HCT116 (cell line): ENCODE measurements at regions of chr1 and their contacts with region 1.

Region 1: DNA sequence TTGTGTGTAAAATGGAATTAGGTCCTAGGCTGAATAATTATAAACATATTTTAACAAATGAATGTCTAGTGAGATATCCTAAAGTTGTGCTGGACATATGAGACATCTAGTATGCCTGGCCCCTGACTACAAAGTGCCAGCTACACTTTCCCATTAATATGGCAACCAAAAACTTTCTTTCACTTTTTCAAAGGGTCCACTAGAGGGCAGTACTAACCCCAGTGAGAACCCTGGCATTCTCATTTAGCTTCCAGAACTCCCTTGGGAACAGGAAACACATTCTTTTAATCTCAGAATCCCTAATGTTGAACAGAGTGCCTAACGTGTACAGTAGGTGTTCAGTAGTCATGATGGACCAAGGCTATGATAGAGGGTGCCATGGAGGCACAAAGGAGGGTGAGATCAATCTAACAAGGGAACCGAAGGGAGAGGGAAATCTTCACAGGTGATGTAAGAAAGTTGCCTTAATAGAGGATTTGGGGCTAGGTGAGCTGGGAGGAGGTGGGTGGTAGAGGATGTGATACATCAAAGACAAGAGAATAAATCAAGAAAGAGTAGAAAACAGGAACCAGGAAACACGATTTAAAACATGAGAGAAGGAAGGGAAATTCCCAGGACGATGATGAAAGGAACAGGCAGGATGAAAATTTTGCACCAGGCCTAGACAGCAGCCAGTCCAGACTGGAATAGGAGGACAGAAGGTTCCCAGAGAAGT is 41.6 kb downstream of the NSL1 start:
- DNase-seq: peak; percentile 44
- ATAC-seq: peak; percentile 86
- H3K4me3 ChIP-seq: no peak overlapping the region
- H3K27ac ChIP-seq: no peak overlapping the region
- H3K4me1 ChIP-seq: peaks cover 0 to 6% of the 10 kb centered on the region in 2 experiments; a peak in 3 of 4 replicates
- H3K27me3 ChIP-seq: no peaks in the 10 kb centered on the region
- CTCF ChIP-seq: peak; percentile 58 to 81 (median 67)
- POLR2A ChIP-seq: no peak
- RAD21 ChIP-seq: peak; percentile 57

Region 2: GRCh38 chr1:212665241-212666115 is 84.5 kb before region 1 on chr1:
- CTCF ChIA-PET with region 1: interaction called, 15 read pairs
- POLR2A ChIA-PET with region 1: interaction called, 5 read pairs
- RAD21 ChIA-PET with region 1: interaction called in 1 of 2 experiments, 3 read pairs
- intact Hi-C with region 1: no loop called
- DNase-seq: peak; percentile 68
- ATAC-seq: peak; percentile 98
- H3K4me3 ChIP-seq: peak overlapping the region; percentile 53 to 64
- H3K27ac ChIP-seq: no peak overlapping the region; the same call in 1 of the 2 replicates
- H3K4me1 ChIP-seq: peaks cover 7 to 20% of the 10 kb centered on the region in 2 experiments; a peak in 3 of 4 replicates
- H3K27me3 ChIP-seq: no peaks in the 10 kb centered on the region
- CTCF ChIP-seq: peak; percentile 84 to 96 (median 84)
- POLR2A ChIP-seq: no peak
- RAD21 ChIP-seq: peak; percentile 95

Region 3: GRCh38 chr1:212738330-212738729 is 11.6 kb before region 1 on chr1:
- CTCF ChIA-PET with region 1: interaction called, 29 read pairs
- POLR2A ChIA-PET with region 1: no interaction called
- RAD21 ChIA-PET with region 1: no interaction called
- intact Hi-C with region 1: no loop called
- DNase-seq: no peak
- ATAC-seq: no peak
- H3K4me3 ChIP-seq: no peak overlapping the region
- H3K27ac ChIP-seq: no peak overlapping the region
- H3K4me1 ChIP-seq: no peaks in the 10 kb centered on the region
- H3K27me3 ChIP-seq: no peaks in the 10 kb centered on the region
- CTCF ChIP-seq: no peak
- POLR2A ChIP-seq: no peak
- RAD21 ChIP-seq: no peak